Lower lobe of right lung (tissue), 2 donors: ENCODE measurements at regions of chr11 and their contacts with region 1.

Region 1: DNA sequence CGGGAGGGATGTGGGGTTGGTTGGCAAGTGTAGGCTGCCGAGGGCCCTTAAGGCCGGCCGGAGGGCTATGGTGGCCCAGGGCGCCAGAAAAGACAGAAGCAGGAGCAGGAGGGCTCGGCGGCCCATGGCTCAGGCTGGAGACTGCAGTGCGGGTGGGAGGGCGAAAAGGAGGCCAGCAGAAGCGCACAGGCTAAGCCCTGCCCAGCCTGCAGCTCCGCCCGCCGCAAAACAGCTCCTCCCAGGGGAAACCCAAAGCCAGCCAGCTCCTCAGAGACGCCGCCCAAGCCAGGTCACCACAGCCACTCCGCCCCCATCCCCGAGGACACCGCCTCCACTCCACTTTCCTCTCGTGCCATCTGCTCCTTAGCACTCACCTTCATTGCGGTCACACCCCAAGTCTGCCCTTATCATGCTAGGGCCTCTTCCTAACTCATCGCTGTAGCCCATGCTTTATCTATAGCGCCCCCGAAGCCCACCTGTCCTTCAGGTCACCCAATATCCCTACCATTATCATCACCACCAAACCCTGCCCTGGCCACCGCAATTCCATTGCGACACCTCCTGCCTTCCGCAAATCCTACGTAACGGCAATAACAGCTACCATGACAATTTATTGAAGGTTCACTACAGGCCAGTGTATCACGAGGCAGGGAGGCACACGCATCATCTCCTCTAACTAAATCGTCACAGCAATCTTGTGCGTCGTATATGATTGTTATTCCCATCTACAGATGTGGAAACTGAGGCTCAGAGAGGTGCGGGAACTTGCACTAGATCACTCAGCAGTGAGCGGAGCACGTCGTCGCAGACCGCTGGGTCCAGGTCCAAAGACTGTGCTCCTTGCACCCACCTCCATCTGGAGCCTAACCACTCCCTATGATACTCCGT is at the start of gene PRCP:
- DNase-seq: peak; percentile 97
- ATAC-seq: peak; percentile 97 to 98
- H3K4me3 ChIP-seq: peak within 1 kb of the TSS; percentile 74
- H3K27ac ChIP-seq: peak within 1 kb of the TSS; percentile 86
- H3K4me1 ChIP-seq: peaks cover 41% of the 10 kb centered on the region
- H3K27me3 ChIP-seq: no peaks in the 10 kb centered on the region
- CTCF ChIP-seq: no peak
- total RNA-seq, gene PRCP: 67.9 TPM

Region 2: GRCh38 chr11:82539669-82540068 is 360.9 kb before region 1 on chr11:
- intact Hi-C with region 1: no loop called
- DNase-seq: no peak
- ATAC-seq: no peak
- H3K4me3 ChIP-seq: no peak overlapping the region
- H3K27ac ChIP-seq: no peak overlapping the region
- H3K4me1 ChIP-seq: no peaks in the 10 kb centered on the region
- H3K27me3 ChIP-seq: no peaks in the 10 kb centered on the region
- CTCF ChIP-seq: no peak

Region 3: GRCh38 chr11:82969811-82970210 is 69.3 kb after region 1 on chr11:
- intact Hi-C with region 1: no loop called
- DNase-seq: no peak
- ATAC-seq: no peak
- H3K4me3 ChIP-seq: no peak overlapping the region
- H3K27ac ChIP-seq: no peak overlapping the region
- H3K4me1 ChIP-seq: no peaks in the 10 kb centered on the region
- H3K27me3 ChIP-seq: no peaks in the 10 kb centered on the region
- CTCF ChIP-seq: no peak

Region 4: DNA sequence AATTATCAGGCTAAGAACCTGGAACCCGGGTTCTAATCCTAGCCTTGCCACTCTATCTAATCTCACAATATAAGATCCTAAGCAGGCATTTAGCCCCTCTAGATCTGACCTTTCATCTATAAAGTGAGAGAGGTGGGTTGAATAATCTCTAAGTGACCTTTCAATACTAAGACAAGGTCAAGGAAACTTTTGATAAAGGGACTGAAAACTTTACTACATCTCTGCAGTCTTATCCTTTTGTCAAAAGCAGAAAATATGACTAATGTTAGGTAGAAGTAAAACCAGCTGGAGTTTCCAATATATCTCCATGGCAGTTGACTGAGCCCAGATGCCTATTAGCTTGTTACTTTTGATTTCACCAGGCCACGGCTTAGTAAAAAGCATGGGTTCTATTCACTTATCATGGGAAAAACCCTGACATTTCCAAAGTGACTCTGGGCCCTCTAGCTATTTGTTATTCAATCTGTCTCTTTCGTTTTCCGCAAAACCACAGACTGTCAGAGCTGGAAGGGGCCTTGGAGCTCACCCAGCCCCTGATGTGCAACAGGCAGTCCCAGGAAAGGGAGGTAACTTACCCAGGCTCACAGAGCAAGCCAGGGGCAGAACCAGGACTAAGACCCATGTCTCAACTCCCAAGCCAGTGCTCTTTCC is 95.4 kb after region 1 on chr11:
- intact Hi-C with region 1: no loop called
- DNase-seq: no peak
- ATAC-seq: no peak
- H3K4me3 ChIP-seq: no peak overlapping the region
- H3K27ac ChIP-seq: no peak overlapping the region
- H3K4me1 ChIP-seq: peaks cover 4% of the 10 kb centered on the region
- H3K27me3 ChIP-seq: no peaks in the 10 kb centered on the region
- CTCF ChIP-seq: no peak

Region 5: DNA sequence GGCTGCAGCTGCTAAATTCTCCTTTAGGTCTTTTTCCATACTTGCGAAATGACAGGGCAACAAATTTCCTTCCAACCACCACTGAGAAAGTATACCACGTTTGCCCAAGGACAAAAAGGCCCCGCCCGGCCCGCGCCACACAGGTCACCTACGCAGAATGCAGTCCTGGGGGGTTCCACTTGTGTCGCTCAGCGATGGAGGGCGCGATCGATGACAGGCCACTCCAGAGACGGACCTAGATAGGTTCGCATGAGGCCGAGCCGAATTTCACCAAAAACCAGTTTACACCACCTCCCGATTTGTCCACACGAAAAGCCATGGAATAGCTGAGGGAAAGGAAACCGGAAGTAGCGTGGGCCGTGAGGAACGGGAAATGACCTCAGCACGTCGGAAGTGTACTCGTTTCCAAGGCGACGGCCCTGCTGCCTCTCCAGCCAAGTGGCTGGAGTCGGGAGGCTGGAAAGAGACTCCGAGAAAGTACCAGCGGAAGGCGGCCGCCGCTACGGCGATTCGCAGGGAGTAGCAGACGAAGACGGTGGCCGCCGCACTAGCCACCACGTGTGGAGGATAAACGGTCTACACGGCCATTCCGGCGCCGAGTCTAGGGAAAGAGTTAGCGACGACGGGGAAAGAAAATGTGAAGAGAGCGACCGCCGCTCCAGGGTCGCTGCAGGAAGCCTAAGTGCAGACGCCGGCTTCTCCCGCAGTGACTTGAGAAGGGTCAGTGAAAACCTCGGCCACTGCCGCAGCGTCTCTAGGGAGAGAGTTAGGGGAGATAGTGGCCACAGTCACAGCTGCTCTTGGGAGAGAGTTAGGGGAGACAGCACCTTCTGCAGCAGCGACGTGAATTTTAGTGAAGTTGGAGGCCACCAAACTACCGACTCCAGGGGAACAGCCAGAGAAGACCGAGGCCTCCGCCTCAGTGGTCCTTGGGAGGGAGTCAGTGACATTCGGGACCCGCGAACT is 293.1 kb after region 1 on chr11 and contains the start of gene ANKRD42:
- intact Hi-C with region 1: loop called (anchors 10 kb)
- DNase-seq: peak; percentile 95
- ATAC-seq: peak; percentile 96 to 98
- H3K4me3 ChIP-seq: peak within 1 kb of the TSS; percentile 85
- H3K27ac ChIP-seq: peak within 1 kb of the TSS; percentile 94
- H3K4me1 ChIP-seq: peaks cover 33% of the 10 kb centered on the region
- H3K27me3 ChIP-seq: no peaks in the 10 kb centered on the region
- CTCF ChIP-seq: no peak
- total RNA-seq, gene ANKRD42: 15.9 TPM

Region 6: DNA sequence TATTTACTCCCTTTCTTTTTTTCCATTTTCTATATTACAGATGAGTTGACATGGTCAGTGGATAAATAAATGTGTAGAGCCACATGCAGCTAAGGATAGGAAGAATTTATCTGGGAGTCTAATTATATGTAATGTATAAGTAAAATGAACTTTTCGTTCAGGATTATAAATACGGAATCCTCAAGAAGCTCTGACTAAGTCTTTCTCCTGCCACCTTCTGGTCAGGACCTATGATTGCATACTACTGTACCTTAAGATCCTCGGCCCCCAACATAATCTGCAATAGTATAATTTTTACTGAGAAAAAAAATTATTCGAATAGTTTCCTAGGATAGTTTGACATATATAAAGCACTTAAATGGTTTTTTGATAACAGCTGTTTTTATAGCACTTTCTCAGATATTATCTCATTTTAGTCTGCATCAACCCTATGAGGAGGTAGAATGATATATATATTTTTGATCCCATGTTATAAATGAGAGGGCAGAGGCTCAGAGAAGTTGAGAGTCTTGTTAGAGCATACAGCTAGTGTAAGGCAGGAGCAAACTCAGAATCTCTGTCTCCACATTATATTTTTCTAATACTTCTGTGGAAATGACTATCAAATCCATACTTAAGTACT is 349.6 kb after region 1 on chr11:
- intact Hi-C with region 1: loop called (anchors 10 kb)
- DNase-seq: no peak
- ATAC-seq: peak in 1 of 2 donors; percentile 71
- H3K4me3 ChIP-seq: no peak overlapping the region
- H3K27ac ChIP-seq: no peak overlapping the region
- H3K4me1 ChIP-seq: no peaks in the 10 kb centered on the region
- H3K27me3 ChIP-seq: no peaks in the 10 kb centered on the region
- CTCF ChIP-seq: peak; percentile 68

Region 7: GRCh38 chr11:83265331-83265730 is 364.8 kb after region 1 on chr11:
- intact Hi-C with region 1: no loop called
- DNase-seq: no peak
- ATAC-seq: no peak
- H3K4me3 ChIP-seq: no peak overlapping the region
- H3K27ac ChIP-seq: no peak overlapping the region
- H3K4me1 ChIP-seq: no peaks in the 10 kb centered on the region
- H3K27me3 ChIP-seq: no peaks in the 10 kb centered on the region
- CTCF ChIP-seq: no peak